K562 (cell line): ENCODE measurements at regions of chr1 and their contacts with region 1.

Region 1: GRCh38 chr1:173867753-173868265 is at the start of gene GAS5:
- DNase-seq: peak; percentile 91 to 100 (median 94)
- ATAC-seq: peak; percentile 85
- H3K4me3 ChIP-seq: peak within 1 kb of the TSS; percentile 86
- H3K27ac ChIP-seq: peak within 1 kb of the TSS; percentile 95
- H3K4me1 ChIP-seq: peaks cover 17 to 34% of the 10 kb centered on the region in 2 experiments
- H3K27me3 ChIP-seq: no peaks in the 10 kb centered on the region; a peak in 1 of 5 replicates
- CTCF ChIP-seq: no peak
- EP300 ChIP-seq: peak; percentile 16; the same call in 1 of the 2 replicates
- POLR2A ChIP-seq: peak; percentile 100
- RAD21 ChIP-seq: peak in 1 of 2 experiments; percentile 13; a peak in 1 of 4 replicates
- polyA plus RNA-seq, gene GAS5: 891 to 1,006 TPM

Region 2: GRCh38 chr1:173429471-173430402 is 438.1 kb before region 1 on chr1:
- CTCF ChIA-PET with region 1: no interaction called
- POLR2A ChIA-PET with region 1: interaction called, 16 read pairs
- in situ Hi-C with region 1: no loop called
- intact Hi-C with region 1: no loop called
- DNase-seq: peak; percentile 78 to 96 (median 83)
- ATAC-seq: peak; percentile 94
- H3K4me3 ChIP-seq: peak overlapping the region; percentile 5; the same call in 1 of the 2 replicates
- H3K27ac ChIP-seq: peak overlapping the region; percentile 89
- H3K4me1 ChIP-seq: peaks cover 19 to 63% of the 10 kb centered on the region in 2 experiments; a peak in 4 of 5 replicates
- H3K27me3 ChIP-seq: no peaks in the 10 kb centered on the region
- CTCF ChIP-seq: peak; percentile 70 to 94 (median 82)
- EP300 ChIP-seq: peak; percentile 64; the same call in 1 of the 2 replicates
- POLR2A ChIP-seq: peak; percentile 58
- RAD21 ChIP-seq: peak; percentile 55 to 75

Region 3: DNA sequence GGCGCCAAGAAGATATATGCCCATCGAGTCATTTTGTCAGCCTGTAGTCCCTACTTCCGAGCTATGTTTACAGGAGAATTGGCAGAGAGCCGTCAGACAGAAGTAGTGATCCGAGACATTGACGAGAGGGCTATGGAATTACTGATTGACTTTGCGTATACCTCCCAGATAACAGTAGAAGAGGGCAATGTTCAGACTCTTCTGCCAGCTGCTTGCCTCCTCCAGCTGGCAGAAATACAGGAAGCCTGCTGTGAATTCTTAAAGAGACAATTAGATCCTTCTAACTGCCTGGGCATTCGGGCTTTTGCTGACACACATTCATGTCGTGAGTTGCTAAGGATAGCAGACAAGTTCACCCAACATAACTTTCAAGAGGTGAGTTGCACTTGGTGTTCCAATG is 133.9 kb before region 1 on chr1:
- CTCF ChIA-PET with region 1: no interaction called
- POLR2A ChIA-PET with region 1: no interaction called
- in situ Hi-C with region 1: no loop called
- intact Hi-C with region 1: no loop called
- DNase-seq: no peak
- ATAC-seq: no peak
- H3K4me3 ChIP-seq: no peak overlapping the region
- H3K27ac ChIP-seq: no peak overlapping the region
- H3K4me1 ChIP-seq: no peaks in the 10 kb centered on the region
- H3K27me3 ChIP-seq: no peaks in the 10 kb centered on the region
- CTCF ChIP-seq: no peak
- EP300 ChIP-seq: no peak
- POLR2A ChIP-seq: no peak
- RAD21 ChIP-seq: no peak

Region 4: DNA sequence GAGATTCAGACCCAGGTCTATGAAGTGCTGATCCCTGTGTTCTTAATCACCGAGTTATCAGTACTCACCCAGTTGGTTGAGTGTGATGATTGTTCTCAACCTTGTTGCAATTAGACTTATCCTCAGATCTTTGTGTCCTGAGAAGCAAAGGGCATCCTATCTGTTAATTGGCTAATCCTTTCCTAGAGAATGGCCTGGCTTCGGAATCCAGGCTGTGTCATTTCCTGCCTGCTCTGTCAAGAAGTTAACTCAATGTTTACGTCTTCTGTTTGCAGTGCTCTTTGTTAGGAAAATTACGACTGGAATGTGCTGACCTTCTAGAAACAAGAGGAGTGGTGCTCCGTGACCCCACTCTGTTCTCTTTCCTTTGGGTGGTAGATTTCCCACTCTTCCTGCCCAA is 14.7 kb before region 1 on chr1:
- CTCF ChIA-PET with region 1: no interaction called
- POLR2A ChIA-PET with region 1: interaction called, 183 read pairs
- in situ Hi-C with region 1: no loop called
- intact Hi-C with region 1: no loop called
- DNase-seq: peak in 1 of 4 experiments; percentile 6
- ATAC-seq: no peak
- H3K4me3 ChIP-seq: no peak overlapping the region
- H3K27ac ChIP-seq: no peak overlapping the region
- H3K4me1 ChIP-seq: no peaks in the 10 kb centered on the region
- H3K27me3 ChIP-seq: no peaks in the 10 kb centered on the region
- CTCF ChIP-seq: no peak
- EP300 ChIP-seq: no peak
- POLR2A ChIP-seq: no peak
- RAD21 ChIP-seq: no peak

Region 5: GRCh38 chr1:173914366-173914871 is 46.6 kb after region 1 on chr1:
- CTCF ChIA-PET with region 1: no interaction called
- POLR2A ChIA-PET with region 1: interaction called, 16 read pairs
- in situ Hi-C with region 1: no loop called
- intact Hi-C with region 1: loop called (anchors 2 kb)
- DNase-seq: peak; percentile 74 to 81 (median 76)
- ATAC-seq: peak; percentile 88
- H3K4me3 ChIP-seq: no peak overlapping the region
- H3K27ac ChIP-seq: no peak overlapping the region
- H3K4me1 ChIP-seq: peaks cover 4 to 20% of the 10 kb centered on the region in 2 experiments; a peak in 4 of 5 replicates
- H3K27me3 ChIP-seq: no peaks in the 10 kb centered on the region
- CTCF ChIP-seq: peak; percentile 72 to 93 (median 82)
- EP300 ChIP-seq: 0 out of 2 replicates have a peak, but pooled peaks have one; percentile 15
- POLR2A ChIP-seq: no peak
- RAD21 ChIP-seq: peak; percentile 12 to 61; a peak in 2 of 4 replicates

Region 6: DNA sequence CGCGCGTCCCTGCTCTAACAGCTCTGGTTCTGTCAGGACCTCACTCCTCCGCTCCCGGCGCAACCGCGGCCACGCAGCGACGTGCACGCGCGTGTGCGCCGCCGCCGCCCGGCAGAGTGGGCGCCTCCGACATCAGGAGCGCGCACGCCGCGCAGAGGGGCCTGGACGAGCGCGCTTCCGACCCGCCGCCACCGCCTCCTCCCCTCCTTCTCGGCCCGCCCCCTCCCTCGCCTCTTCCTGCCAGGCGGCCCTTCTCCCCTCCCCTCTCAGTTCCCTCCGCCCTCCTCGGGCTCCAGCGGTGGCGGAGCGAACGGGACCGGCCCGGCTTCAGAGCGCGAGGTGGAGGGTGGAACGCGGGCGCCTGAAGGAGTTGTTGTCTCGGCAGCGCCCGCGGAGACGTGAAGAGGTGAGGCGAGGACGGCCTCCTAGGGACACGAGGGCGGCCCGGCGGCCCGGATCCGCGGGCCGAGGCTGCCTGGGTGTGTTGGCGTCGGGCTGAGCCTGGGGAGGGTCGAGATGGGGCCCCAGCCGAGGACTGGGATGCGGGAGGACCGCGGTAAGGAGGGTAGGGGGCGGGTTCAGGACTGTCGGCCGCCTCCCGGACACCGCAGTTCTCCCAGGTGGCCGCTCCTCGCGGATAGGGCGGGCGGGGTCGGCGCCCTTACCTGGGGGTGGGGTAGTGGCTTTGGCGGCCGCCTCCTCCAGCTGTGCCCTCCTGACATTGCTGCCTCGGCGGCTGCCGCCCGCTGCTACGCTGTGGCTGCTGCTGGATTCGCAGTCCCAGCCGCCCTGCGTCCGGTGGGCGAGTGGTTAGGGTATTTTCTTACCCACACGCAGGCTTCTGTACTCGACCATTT is 291.7 kb after region 1 on chr1 and contains the start of gene RABGAP1L:
- CTCF ChIA-PET with region 1: no interaction called
- POLR2A ChIA-PET with region 1: interaction called, 5 read pairs
- in situ Hi-C with region 1: no loop called
- intact Hi-C with region 1: loop called (anchors 1 kb)
- DNase-seq: peak; percentile 97 to 99 (median 98)
- ATAC-seq: peak; percentile 91
- H3K4me3 ChIP-seq: peak within 1 kb of the TSS; percentile 78
- H3K27ac ChIP-seq: peak within 1 kb of the TSS; percentile 92
- H3K4me1 ChIP-seq: peaks cover 26 to 50% of the 10 kb centered on the region in 2 experiments
- H3K27me3 ChIP-seq: no peaks in the 10 kb centered on the region
- CTCF ChIP-seq: peak in 2 of 3 experiments; percentile 3 to 9; a peak in 1 of 6 replicates
- EP300 ChIP-seq: no peak; the same call in 1 of the 2 replicates
- POLR2A ChIP-seq: peak; percentile 96
- RAD21 ChIP-seq: 0 out of 4 replicates have a peak, but pooled peaks of 1 of the 2 experiments have one; percentile 11
- polyA plus RNA-seq, gene RABGAP1L: 16.5 to 19.0 TPM